ENCODE measurements at regions of chr11 and their contacts with region 1.

Region 1: GRCh38 chr11:86302100-86302793 is at the start of gene HIKESHI:
- DNase-seq: peak; percentile 98 to 99
- H3K4me3 ChIP-seq: peak within 1 kb of the TSS; percentile 58
- H3K4me3 Mint-ChIP-seq: peak within 1 kb of the TSS; percentile 98
- H3K27ac Mint-ChIP-seq: peak within 1 kb of the TSS; percentile 99
- H3K4me1 ChIP-seq: 0 out of 2 replicates have a peak, but pooled peaks cover 10% of the 10 kb centered on the region
- H3K4me1 Mint-ChIP-seq: peaks cover 8% of the 10 kb centered on the region
- H3K27me3 ChIP-seq: no peaks in the 10 kb centered on the region
- H3K27me3 Mint-ChIP-seq: no peaks in the 10 kb centered on the region
- CTCF ChIP-seq: no peak
- total RNA-seq, gene HIKESHI: 81.3 and 82.0 TPM in 2 replicates

Region 2: DNA sequence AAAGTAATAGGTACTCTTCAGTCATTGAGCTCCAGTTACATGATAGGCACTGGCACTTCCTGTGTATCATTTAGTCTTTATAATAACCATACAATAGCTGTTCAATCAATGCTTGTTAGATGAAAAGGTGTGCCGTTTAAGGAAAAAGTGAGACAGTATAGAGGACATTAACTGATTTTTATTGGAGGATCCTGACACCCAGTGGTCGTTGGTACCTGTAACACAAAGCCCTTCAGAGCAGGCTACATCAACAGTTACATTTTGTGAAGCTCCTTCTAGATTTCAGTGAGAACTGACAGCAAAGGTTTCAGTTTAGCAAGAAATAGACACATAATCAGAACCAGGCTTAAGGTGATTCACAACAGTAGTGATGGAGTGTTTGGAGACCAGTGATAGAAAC is 116.7 kb after region 1 on chr11:
- CTCF ChIA-PET with region 1: interaction called, 3 read pairs
- POLR2A ChIA-PET with region 1: no interaction called
- intact Hi-C with region 1: loop called (anchors 5 kb)
- DNase-seq: peak in 1 of 2 experiments; percentile 46
- H3K4me3 ChIP-seq: no peak overlapping the region
- H3K4me3 Mint-ChIP-seq: no peak overlapping the region
- H3K27ac Mint-ChIP-seq: no peak overlapping the region
- H3K4me1 ChIP-seq: peaks cover 19% of the 10 kb centered on the region
- H3K4me1 Mint-ChIP-seq: peaks cover 33% of the 10 kb centered on the region
- H3K27me3 ChIP-seq: no peaks in the 10 kb centered on the region
- H3K27me3 Mint-ChIP-seq: no peaks in the 10 kb centered on the region
- CTCF ChIP-seq: peak; percentile 31 to 61